ENCODE measurements at regions of chr4 and their contacts with region 1.

Region 1: DNA sequence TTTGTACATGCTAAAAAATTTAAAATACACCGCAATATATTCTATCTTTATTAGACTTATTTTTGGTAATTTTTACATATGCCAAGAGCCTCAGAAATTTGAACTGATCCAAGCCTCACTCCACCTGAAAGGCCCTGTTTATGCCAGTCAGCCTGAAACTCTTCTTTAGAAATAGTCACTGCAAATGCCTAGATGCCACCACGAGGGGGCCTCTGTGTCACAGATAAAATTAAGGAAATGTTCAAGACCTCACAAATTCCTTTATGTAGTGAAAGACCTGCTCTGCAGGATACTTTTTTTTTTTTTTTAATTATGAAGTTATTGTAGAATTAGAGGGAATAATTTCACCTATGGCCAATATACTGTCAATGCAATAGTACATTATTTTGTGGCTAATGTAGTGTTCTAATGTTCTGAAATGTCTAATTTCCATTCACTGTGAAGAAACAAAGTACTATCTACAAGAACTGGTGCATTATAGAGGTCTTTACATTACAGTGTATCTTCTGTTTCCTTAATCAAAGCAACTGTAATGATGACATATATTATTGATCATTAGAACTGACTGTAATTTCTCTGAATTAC is 69.8 kb downstream of the DTHD1 start:
- DNase-seq: peak; percentile 29
- ATAC-seq: peak; percentile 49
- H3K4me3 Mint-ChIP-seq: no peak overlapping the region
- H3K27ac Mint-ChIP-seq: no peak overlapping the region
- H3K4me1 Mint-ChIP-seq: peaks cover 22% of the 10 kb centered on the region
- H3K27me3 Mint-ChIP-seq: no peaks in the 10 kb centered on the region
- CTCF ChIP-seq: peak; percentile 91

Region 2: GRCh38 chr4:36208893-36209473 is 142.2 kb before region 1 on chr4:
- CTCF ChIA-PET with region 1: no interaction called
- POLR2A ChIA-PET with region 1: no interaction called
- intact Hi-C with region 1: no loop called
- DNase-seq: no peak
- ATAC-seq: no peak
- H3K4me3 Mint-ChIP-seq: no peak overlapping the region
- H3K27ac Mint-ChIP-seq: no peak overlapping the region
- H3K4me1 Mint-ChIP-seq: peaks cover 18% of the 10 kb centered on the region
- H3K27me3 Mint-ChIP-seq: no peaks in the 10 kb centered on the region
- CTCF ChIP-seq: no peak

Region 3: GRCh38 chr4:36224972-36225903 is 125.9 kb before region 1 on chr4:
- CTCF ChIA-PET with region 1: no interaction called
- POLR2A ChIA-PET with region 1: no interaction called
- intact Hi-C with region 1: no loop called
- DNase-seq: peak; percentile 16
- ATAC-seq: peak; percentile 78
- H3K4me3 Mint-ChIP-seq: peak overlapping the region; percentile 11
- H3K27ac Mint-ChIP-seq: peak overlapping the region; percentile 72
- H3K4me1 Mint-ChIP-seq: peaks cover 61% of the 10 kb centered on the region
- H3K27me3 Mint-ChIP-seq: no peaks in the 10 kb centered on the region
- CTCF ChIP-seq: no peak

Region 4: DNA sequence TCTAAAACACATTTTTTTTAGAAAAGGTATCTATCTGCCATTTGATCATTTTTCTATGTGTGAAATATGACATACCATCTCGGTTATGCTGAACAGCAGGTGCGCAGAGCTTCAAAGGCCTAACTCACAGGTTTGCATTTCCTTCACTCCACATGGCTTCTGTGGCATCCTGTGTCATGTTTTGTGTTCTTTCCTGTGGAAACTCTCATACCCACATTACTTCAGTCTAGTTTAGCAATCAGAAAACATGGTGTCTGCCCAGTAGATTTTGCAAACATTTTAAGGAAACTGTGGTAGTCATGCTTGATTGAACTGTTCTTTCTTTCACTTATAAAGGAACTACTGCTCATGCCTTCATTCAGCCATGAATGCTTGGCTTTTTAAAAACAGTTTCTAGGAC is 95.6 kb before region 1 on chr4:
- CTCF ChIA-PET with region 1: no interaction called
- POLR2A ChIA-PET with region 1: interaction called, 3 read pairs
- intact Hi-C with region 1: loop called (anchors 5 kb)
- DNase-seq: no peak
- ATAC-seq: peak; percentile 90
- H3K4me3 Mint-ChIP-seq: peak overlapping the region; percentile 81
- H3K27ac Mint-ChIP-seq: peak overlapping the region; percentile 95
- H3K4me1 Mint-ChIP-seq: peaks cover 32% of the 10 kb centered on the region
- H3K27me3 Mint-ChIP-seq: no peaks in the 10 kb centered on the region
- CTCF ChIP-seq: no peak

Region 5: DNA sequence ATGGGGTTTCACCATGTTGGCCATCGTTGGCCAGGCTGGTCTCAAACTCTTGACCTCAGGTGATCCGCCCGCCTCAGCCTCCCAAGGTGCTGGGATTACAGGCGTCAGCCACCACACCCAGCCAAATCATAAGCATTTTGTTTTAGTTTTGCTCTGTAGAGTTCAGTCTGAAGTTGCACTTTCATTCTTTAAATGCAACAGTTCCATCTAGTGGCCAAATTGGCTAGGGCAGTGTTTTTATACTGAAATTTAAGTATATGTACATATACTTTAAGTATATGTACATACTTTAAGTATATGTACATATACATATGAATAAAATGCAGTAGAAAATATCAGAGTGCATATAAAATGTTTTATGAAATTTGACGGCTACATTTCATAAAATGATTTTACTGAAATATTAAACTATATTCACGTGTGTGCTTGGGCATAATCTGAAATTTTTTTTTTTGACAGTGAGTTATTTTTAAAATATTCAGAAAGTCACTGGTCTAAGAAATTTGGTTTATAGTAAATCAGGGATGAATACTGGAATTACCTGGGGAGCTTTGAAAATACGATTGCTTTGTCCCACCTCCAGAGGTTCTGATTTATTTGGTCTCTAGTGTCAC is 1038.9 kb after region 1 on chr4:
- CTCF ChIA-PET with region 1: no interaction called
- POLR2A ChIA-PET with region 1: no interaction called
- intact Hi-C with region 1: loop called (anchors 2 kb)
- DNase-seq: no peak
- ATAC-seq: no peak
- H3K4me3 Mint-ChIP-seq: no peak overlapping the region
- H3K27ac Mint-ChIP-seq: no peak overlapping the region
- H3K4me1 Mint-ChIP-seq: no peaks in the 10 kb centered on the region
- H3K27me3 Mint-ChIP-seq: peaks cover 9% of the 10 kb centered on the region
- CTCF ChIP-seq: peak; percentile 21

Measured in activated B cell treated with CpG ODN at 0.5 μM for 24 hours (primary cell).